CD4-positive, alpha-beta T cell (primary cell): ENCODE measurements at regions of chr3 and their contacts with region 1.

Region 1: DNA sequence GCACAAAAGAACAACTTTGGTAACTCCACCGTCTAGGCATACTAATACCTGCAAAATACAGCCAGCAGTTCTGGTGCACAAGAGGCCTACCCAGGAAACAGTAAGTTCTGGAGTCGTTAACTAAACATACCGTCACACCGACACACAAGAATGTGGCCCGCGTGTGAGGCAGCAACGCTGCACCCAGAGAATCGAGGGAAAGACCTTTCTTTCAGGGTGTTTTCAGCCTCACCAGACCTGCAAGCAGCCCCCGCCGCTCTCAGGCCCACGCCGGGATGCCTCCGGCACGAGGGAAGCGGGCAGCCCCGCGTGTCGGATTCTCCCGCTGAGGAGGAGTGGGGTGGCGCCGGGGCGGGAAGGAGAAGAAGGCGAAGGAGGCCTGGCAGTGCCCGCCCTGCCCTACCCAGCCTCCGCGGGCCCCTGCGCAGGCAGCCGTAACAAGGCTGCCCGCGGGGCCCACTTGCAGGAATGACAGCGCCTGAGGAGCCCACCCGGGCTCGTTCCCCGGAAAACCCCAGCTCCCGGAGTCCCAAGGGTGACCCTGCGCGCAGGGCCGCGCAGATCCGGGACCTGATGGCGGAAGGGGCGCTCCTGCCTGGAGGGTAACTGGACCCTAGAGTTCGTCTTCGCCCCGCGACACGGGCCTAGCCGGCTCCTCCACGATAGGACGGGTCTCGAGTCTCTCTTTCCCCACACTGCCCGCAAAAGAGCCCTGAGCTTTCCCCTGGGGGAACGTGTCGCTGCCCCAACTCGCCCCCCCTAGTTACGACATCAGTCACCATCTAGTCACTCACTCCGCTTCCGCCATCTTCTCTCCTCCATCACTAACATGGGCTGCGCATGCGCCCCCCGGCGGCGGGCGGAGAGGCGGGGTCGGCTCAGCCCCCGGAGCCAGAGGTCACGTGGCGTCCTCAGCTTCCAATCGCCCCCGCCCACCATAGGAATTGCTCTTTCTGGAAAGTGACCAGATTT is at the start of gene PHC3:
- DNase-seq: peak; percentile 85 to 96 (median 90)
- ATAC-seq: peak; percentile 64
- H3K4me3 ChIP-seq: peak within 1 kb of the TSS; percentile 96
- H3K4me3 Mint-ChIP-seq: peak within 1 kb of the TSS; percentile 100
- H3K27ac ChIP-seq: peak within 1 kb of the TSS; percentile 97 to 99
- H3K27ac Mint-ChIP-seq: peak within 1 kb of the TSS; percentile 100
- H3K4me1 ChIP-seq: peaks cover 36% of the 10 kb centered on the region
- H3K4me1 Mint-ChIP-seq: peaks cover 40% of the 10 kb centered on the region
- H3K27me3 ChIP-seq: no peaks in the 10 kb centered on the region
- H3K27me3 Mint-ChIP-seq: no peaks in the 10 kb centered on the region
- CTCF ChIP-seq: no peak
- total RNA-seq, gene PHC3: 143 to 150 TPM

Region 2: DNA sequence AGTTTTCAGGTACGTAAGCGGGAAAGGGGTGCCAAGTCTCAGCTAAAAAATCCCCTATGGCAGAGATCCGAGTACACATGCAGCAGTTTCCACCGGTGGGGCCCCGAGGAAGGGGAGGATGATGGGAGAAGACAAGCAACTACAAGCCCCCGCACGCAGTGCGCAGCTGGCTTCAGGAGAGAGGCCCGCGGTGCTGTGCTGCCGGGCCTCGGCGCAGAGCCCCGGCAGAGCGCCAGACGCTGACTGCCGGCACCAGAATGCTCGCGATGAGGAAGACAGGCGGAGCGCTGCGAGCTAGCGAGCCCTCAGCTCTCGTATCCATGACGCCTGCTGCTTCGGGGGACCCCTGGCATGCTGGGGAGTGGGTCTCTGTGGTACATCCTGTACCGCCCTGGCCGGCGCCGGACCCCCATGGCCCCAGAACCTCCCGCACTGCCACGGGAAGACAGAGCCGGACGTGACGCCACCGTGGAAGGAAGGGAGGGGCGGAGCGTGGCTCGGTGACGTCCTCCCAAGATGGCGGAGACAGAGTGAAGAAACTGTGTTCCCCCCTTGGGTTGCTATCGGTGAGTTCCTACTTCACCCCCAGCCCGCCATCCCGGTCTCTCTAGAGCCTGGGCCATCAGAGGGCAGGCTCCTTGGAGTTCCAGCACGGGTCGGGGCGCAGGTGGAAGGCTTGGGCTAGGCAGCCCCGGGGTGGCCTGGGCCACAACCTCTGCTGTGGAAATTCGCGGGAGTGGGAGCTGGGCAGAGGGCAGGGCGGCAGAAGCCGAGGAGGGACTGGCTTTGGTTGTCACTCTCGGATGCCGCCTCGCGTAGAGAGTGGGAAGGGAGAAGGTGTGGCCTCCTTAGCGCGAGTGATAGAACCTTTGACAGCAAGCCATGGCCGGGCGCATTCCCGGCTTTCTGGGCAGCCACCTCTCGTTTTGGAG is 408.0 kb before region 1 on chr3 and contains the start of gene MYNN:
- CTCF ChIA-PET with region 1: no interaction called
- POLR2A ChIA-PET with region 1: interaction called, 11 read pairs
- intact Hi-C with region 1: loop called (anchors 2 to 5 kb)
- DNase-seq: peak; percentile 81 to 96 (median 89)
- ATAC-seq: peak; percentile 80
- H3K4me3 ChIP-seq: peak within 1 kb of the TSS; percentile 83
- H3K4me3 Mint-ChIP-seq: peak within 1 kb of the TSS; percentile 98
- H3K27ac ChIP-seq: peak within 1 kb of the TSS; percentile 98 to 100
- H3K27ac Mint-ChIP-seq: peak within 1 kb of the TSS; percentile 100
- H3K4me1 ChIP-seq: peaks cover 22% of the 10 kb centered on the region
- H3K4me1 Mint-ChIP-seq: peaks cover 69% of the 10 kb centered on the region
- H3K27me3 ChIP-seq: no peaks in the 10 kb centered on the region
- H3K27me3 Mint-ChIP-seq: peaks cover 12% of the 10 kb centered on the region
- CTCF ChIP-seq: no peak
- total RNA-seq, gene MYNN: 18.7 to 20.6 TPM

Region 3: GRCh38 chr3:170128977-170129431 is 52.2 kb before region 1 on chr3:
- CTCF ChIA-PET with region 1: no interaction called
- POLR2A ChIA-PET with region 1: interaction called, 3 read pairs
- intact Hi-C with region 1: loop called in 1 of 2 experiments (anchors 5 kb)
- DNase-seq: peak in 2 of 14 experiments; percentile 2 to 18
- ATAC-seq: peak; percentile 21
- H3K4me3 ChIP-seq: no peak overlapping the region
- H3K4me3 Mint-ChIP-seq: peak overlapping the region; percentile 6
- H3K27ac ChIP-seq: peak overlapping the region in 1 of 2 donors; percentile 13
- H3K27ac Mint-ChIP-seq: peak overlapping the region; percentile 54
- H3K4me1 ChIP-seq: peaks cover 13% of the 10 kb centered on the region
- H3K4me1 Mint-ChIP-seq: peaks cover 49% of the 10 kb centered on the region
- H3K27me3 ChIP-seq: no peaks in the 10 kb centered on the region
- H3K27me3 Mint-ChIP-seq: no peaks in the 10 kb centered on the region
- CTCF ChIP-seq: no peak

Region 4: DNA sequence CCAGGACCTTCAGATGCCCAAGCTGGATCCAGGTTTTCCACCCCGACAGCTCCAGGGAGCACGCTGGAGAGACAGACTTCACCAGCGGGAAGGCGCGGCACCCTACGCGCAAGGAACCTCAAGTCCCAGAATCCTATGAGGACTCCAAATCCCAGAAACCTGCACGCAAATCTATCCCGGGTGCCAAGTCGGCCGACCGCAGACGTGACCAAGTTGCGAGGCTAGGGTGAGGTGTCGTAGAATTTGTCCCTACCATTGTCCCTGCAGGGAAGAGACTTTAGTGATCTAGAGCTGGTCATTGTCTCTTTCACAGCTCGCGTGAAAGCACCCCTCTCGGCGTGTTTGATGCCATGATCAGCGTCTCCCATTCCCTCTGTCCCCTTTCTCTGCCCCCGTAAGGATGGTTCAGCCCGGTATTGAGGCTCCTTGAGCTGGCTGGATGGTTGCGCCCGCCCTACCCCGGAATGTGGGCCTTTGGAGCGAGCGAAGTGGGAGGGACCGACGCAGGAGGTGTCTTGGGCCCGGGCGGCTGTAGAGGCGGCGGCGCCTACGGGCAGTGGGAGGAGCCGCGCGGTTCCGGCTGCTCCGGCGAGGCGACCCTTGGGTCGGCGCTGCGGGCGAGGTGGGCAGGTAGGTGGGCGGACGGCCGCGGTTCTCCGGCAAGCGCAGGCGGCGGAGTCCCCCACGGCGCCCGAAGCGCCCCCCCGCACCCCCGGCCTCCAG is 40.9 kb after region 1 on chr3 and contains the start of gene PRKCI:
- CTCF ChIA-PET with region 1: interaction called, 3 read pairs
- POLR2A ChIA-PET with region 1: interaction called, 15 read pairs
- intact Hi-C with region 1: loop called (anchors 2 kb)
- DNase-seq: peak; percentile 79 to 96 (median 86)
- ATAC-seq: peak; percentile 84
- H3K4me3 ChIP-seq: peak within 1 kb of the TSS; percentile 72
- H3K4me3 Mint-ChIP-seq: peak within 1 kb of the TSS; percentile 95
- H3K27ac ChIP-seq: peak within 1 kb of the TSS; percentile 55 to 78
- H3K27ac Mint-ChIP-seq: peak within 1 kb of the TSS; percentile 93
- H3K4me1 ChIP-seq: peaks cover 15% of the 10 kb centered on the region
- H3K4me1 Mint-ChIP-seq: peaks cover 32% of the 10 kb centered on the region
- H3K27me3 ChIP-seq: no peaks in the 10 kb centered on the region
- H3K27me3 Mint-ChIP-seq: no peaks in the 10 kb centered on the region
- CTCF ChIP-seq: no peak
- total RNA-seq, gene PRKCI: 16.4 to 18.0 TPM